ENCODE measurements at regions of chr18 and their contacts with region 1.

Region 1: DNA sequence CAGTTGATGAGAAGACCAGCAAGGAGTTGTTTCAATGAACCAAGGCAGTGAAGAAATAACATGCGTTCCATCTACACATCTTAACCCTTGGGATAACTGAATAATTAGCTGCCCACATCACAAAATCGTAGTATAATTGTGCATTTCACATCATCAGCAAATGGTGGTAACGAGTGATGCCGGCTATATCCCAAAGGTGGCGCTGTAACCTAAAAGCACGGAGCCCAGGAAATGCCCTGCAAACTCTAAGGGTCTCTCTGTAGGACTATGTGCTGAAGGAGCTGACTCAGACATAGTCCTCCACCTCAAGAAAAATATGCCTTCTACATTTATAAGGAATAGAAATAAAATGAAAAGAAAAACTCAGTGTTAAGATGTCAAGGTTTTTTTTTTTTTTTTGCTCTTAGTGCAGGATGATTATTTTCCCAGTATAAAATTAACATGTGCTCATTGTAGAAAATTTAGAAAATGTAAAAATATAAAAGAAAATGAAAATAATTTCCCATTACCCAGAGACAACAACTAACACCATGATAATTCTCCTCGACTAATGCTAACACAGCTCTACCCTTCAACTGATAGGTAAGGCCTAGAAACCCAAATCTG is 23.1 kb upstream of the DSG3 start:
- DNase-seq: peak in 1 of 2 experiments; percentile 46
- H3K4me3 ChIP-seq: no peak overlapping the region
- H3K27ac ChIP-seq: no peak overlapping the region
- H3K4me1 ChIP-seq: no peaks in the 10 kb centered on the region
- H3K27me3 ChIP-seq: no peaks in the 10 kb centered on the region
- CTCF ChIP-seq: peak; percentile 89

Region 2: GRCh38 chr18:30971338-30971956 is 453.0 kb before region 1 on chr18:
- CTCF ChIA-PET with region 1: no interaction called
- POLR2A ChIA-PET with region 1: no interaction called
- intact Hi-C with region 1: loop called (anchors 10 kb)
- DNase-seq: no peak
- H3K4me3 ChIP-seq: no peak overlapping the region
- H3K27ac ChIP-seq: no peak overlapping the region
- H3K4me1 ChIP-seq: 0 out of 2 replicates have a peak, but pooled peaks cover 4% of the 10 kb centered on the region
- H3K27me3 ChIP-seq: no peaks in the 10 kb centered on the region
- CTCF ChIP-seq: peak; percentile 65

Region 3: GRCh38 chr18:31134988-31135529 is 289.4 kb before region 1 on chr18:
- CTCF ChIA-PET with region 1: no interaction called
- POLR2A ChIA-PET with region 1: no interaction called
- intact Hi-C with region 1: no loop called
- DNase-seq: no peak
- H3K4me3 ChIP-seq: no peak overlapping the region
- H3K27ac ChIP-seq: no peak overlapping the region
- H3K4me1 ChIP-seq: no peaks in the 10 kb centered on the region
- H3K27me3 ChIP-seq: no peaks in the 10 kb centered on the region
- CTCF ChIP-seq: no peak

Region 4: DNA sequence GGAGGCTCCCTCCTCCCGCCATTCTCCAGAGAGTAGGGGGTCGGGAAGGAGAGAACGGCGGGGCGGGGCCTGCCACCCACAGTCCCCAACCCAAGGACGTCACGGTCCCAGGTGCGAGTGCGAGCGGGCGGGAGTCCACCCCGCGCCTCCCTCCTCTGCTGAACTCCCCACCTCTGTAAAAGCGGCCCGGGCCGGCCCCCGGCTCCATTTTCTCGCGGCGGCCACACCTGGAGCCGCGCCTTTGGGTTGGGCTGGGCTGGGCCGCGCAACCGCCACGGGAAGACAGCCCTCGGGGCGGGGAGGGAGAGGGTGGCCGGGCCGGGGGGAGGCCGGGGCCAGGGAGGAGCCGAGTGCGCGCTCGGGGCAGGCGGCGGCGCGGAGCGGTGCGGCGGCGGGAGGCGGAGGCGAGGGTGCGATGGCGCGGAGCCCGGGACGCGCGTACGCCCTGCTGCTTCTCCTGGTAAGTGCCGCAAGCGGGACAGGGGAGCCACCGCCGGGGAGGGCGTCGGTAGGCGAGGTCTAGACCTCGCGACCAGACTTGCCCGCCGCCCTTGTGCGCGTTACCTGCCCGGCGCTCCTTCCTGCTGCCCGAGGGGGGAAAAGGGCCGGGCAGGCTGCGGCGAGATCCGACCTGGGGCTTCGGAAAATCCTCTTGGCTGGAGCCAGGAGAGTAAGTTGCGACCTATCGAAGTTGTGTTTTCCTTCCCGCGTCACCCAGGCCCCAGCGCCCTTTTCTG is 73.5 kb after region 1 on chr18 and contains the start of gene DSG2:
- CTCF ChIA-PET with region 1: no interaction called
- POLR2A ChIA-PET with region 1: no interaction called
- intact Hi-C with region 1: loop called (anchors 2 kb)
- DNase-seq: peak in 1 of 2 experiments; percentile 80
- H3K4me3 ChIP-seq: peak within 1 kb of the TSS; percentile 96
- H3K27ac ChIP-seq: peak within 1 kb of the TSS; percentile 82
- H3K4me1 ChIP-seq: peaks cover 12% of the 10 kb centered on the region
- H3K27me3 ChIP-seq: no peaks in the 10 kb centered on the region
- CTCF ChIP-seq: no peak
- total RNA-seq, gene DSG2: 66.0 and 90.1 TPM in 2 replicates